CD4-positive, alpha-beta memory T cell (primary cell): ENCODE measurements at regions of chr17 and their contacts with region 1.

Region 1: GRCh38 chr17:7931709-7932482 is at the starts of genes CNTROB and TRAPPC1:
- DNase-seq: peak; percentile 99 to 100 (median 99)
- H3K4me3 ChIP-seq: peak within 1 kb of the TSS; percentile 84 to 100
- H3K4me3 Mint-ChIP-seq: peak within 1 kb of the TSS; percentile 94 to 100 (median 98)
- H3K27ac ChIP-seq: peak within 1 kb of the TSS; percentile 85
- H3K27ac Mint-ChIP-seq: peak within 1 kb of the TSS; percentile 88 to 100 (median 98)
- H3K4me1 ChIP-seq: peaks cover 33% of the 10 kb centered on the region
- H3K4me1 Mint-ChIP-seq: peaks cover 34 to 58% (median 44%) of the 10 kb centered on the region in 4 donors
- H3K27me3 ChIP-seq: no peaks in the 10 kb centered on the region
- H3K27me3 Mint-ChIP-seq: no peaks in the 10 kb centered on the region
- total RNA-seq, gene CNTROB: 29.7 to 30.1 TPM
- total RNA-seq, gene TRAPPC1: 116 TPM

Region 2: GRCh38 chr17:7483238-7484066 is 448.4 kb before region 1 on chr17:
- CTCF ChIA-PET with region 1: no interaction called
- POLR2A ChIA-PET with region 1: no interaction called
- intact Hi-C with region 1: no loop called
- DNase-seq: peak; percentile 96 to 98 (median 97)
- H3K4me3 ChIP-seq: peak overlapping the region; percentile 92 to 95
- H3K4me3 Mint-ChIP-seq: peak overlapping the region; percentile 96 to 100 (median 98)
- H3K27ac ChIP-seq: peak overlapping the region; percentile 99
- H3K27ac Mint-ChIP-seq: peak overlapping the region; percentile 99 to 100 (median 100)
- H3K4me1 ChIP-seq: peaks cover 53% of the 10 kb centered on the region
- H3K4me1 Mint-ChIP-seq: peaks cover 43 to 85% (median 61%) of the 10 kb centered on the region in 4 donors
- H3K27me3 ChIP-seq: no peaks in the 10 kb centered on the region
- H3K27me3 Mint-ChIP-seq: no peaks in the 10 kb centered on the region

Region 3: GRCh38 chr17:7856883-7857723 is 74.8 kb before region 1 on chr17 and contains the start of gene NAA38:
- CTCF ChIA-PET with region 1: interaction called, 9 read pairs
- POLR2A ChIA-PET with region 1: interaction called, 19 read pairs
- intact Hi-C with region 1: loop called (anchors 1 kb)
- DNase-seq: peak; percentile 97 to 99 (median 98)
- H3K4me3 ChIP-seq: peak within 1 kb of the TSS; percentile 67 to 96
- H3K4me3 Mint-ChIP-seq: no peak within 1 kb of the TSS
- H3K27ac ChIP-seq: peak within 1 kb of the TSS; percentile 81
- H3K27ac Mint-ChIP-seq: no peak within 1 kb of the TSS
- H3K4me1 ChIP-seq: peaks cover 32% of the 10 kb centered on the region
- H3K4me1 Mint-ChIP-seq: peaks cover under 1 to 11% (median 7%) of the 10 kb centered on the region in 4 donors
- H3K27me3 ChIP-seq: no peaks in the 10 kb centered on the region
- H3K27me3 Mint-ChIP-seq: no peaks in the 10 kb centered on the region
- total RNA-seq, gene NAA38: 23.1 to 25.8 TPM

Region 4: GRCh38 chr17:7915611-7916382 is 16.1 kb before region 1 on chr17 and contains the start of gene RNF227:
- CTCF ChIA-PET with region 1: interaction called, 19 read pairs
- POLR2A ChIA-PET with region 1: interaction called, 116 read pairs
- intact Hi-C with region 1: loop called (anchors 2 kb)
- DNase-seq: peak; percentile 84 to 88 (median 84)
- H3K4me3 ChIP-seq: peak within 1 kb of the TSS; percentile 33 to 71
- H3K4me3 Mint-ChIP-seq: peak within 1 kb of the TSS; percentile 88 to 95 (median 90)
- H3K27ac ChIP-seq: peak within 1 kb of the TSS; percentile 67
- H3K27ac Mint-ChIP-seq: peak within 1 kb of the TSS; percentile 91 to 95 (median 93)
- H3K4me1 ChIP-seq: peaks cover 26% of the 10 kb centered on the region
- H3K4me1 Mint-ChIP-seq: peaks cover 19 to 34% (median 24%) of the 10 kb centered on the region in 4 donors
- H3K27me3 ChIP-seq: no peaks in the 10 kb centered on the region
- H3K27me3 Mint-ChIP-seq: no peaks in the 10 kb centered on the region
- total RNA-seq, gene RNF227: 6.7 to 7.4 TPM

Region 5: GRCh38 chr17:7969433-7969832 is 37.5 kb after region 1 on chr17:
- CTCF ChIA-PET with region 1: no interaction called
- POLR2A ChIA-PET with region 1: no interaction called
- intact Hi-C with region 1: loop called (anchors 5 kb)
- DNase-seq: no peak
- H3K4me3 ChIP-seq: no peak overlapping the region
- H3K4me3 Mint-ChIP-seq: no peak overlapping the region
- H3K27ac ChIP-seq: no peak overlapping the region
- H3K27ac Mint-ChIP-seq: no peak overlapping the region
- H3K4me1 ChIP-seq: no peaks in the 10 kb centered on the region
- H3K4me1 Mint-ChIP-seq: no peaks in the 10 kb centered on the region
- H3K27me3 ChIP-seq: no peaks in the 10 kb centered on the region
- H3K27me3 Mint-ChIP-seq: peaks cover 0 to 9% of the 10 kb centered on the region in 2 donors

Region 6: DNA sequence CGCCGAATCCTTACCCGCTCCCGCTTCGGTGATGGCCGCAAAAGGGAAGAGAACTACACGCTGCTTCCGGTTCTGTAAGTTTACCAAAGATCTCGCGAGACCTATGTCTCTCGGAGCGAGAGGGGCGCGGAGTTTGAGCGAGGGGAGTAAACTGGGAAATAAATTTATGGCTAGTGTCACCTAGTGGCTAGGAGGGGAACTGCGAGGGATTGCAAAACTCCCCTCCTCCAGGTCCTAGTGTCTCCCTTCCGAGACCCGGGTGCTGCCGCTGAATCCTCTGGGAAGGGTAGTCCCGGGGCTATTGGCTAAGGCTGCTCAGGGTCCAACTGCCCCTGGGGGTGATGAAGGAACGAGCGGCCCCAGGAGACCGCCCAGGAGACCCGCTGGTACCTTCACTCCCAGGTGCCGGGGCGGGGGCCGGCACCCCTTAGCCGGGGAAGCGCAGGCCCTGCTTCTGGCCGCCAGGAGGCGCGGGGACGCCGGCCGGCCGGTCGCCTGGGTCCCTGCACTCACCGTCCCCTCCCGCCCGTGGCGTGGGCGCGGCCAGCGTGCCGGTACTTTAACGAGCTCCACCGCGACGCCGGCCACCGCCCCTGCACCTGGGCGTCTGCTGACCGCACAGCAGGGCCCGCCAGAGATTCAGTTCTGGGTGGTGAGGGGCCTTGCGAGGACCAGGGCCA is 451.4 kb after region 1 on chr17 and contains the start of gene RPL26:
- CTCF ChIA-PET with region 1: no interaction called
- POLR2A ChIA-PET with region 1: no interaction called
- intact Hi-C with region 1: loop called (anchors 2 kb)
- DNase-seq: peak; percentile 96 to 98 (median 97)
- H3K4me3 ChIP-seq: peak within 1 kb of the TSS; percentile 74 to 95
- H3K4me3 Mint-ChIP-seq: peak within 1 kb of the TSS; percentile 95 to 99 (median 97)
- H3K27ac ChIP-seq: peak within 1 kb of the TSS; percentile 77
- H3K27ac Mint-ChIP-seq: peak within 1 kb of the TSS; percentile 94 to 97 (median 96)
- H3K4me1 ChIP-seq: peaks cover 49% of the 10 kb centered on the region
- H3K4me1 Mint-ChIP-seq: peaks cover 36 to 82% (median 54%) of the 10 kb centered on the region in 4 donors
- H3K27me3 ChIP-seq: no peaks in the 10 kb centered on the region
- H3K27me3 Mint-ChIP-seq: no peaks in the 10 kb centered on the region
- total RNA-seq, gene RPL26: 2,761 to 2,878 TPM

Region 7: GRCh38 chr17:9402590-9403199 is 1470.8 kb after region 1 on chr17:
- CTCF ChIA-PET with region 1: no interaction called
- POLR2A ChIA-PET with region 1: no interaction called
- intact Hi-C with region 1: no loop called
- DNase-seq: peak in 3 of 5 donors; percentile 6 to 31 (median 8)
- H3K4me3 ChIP-seq: no peak overlapping the region
- H3K4me3 Mint-ChIP-seq: no peak overlapping the region
- H3K27ac ChIP-seq: no peak overlapping the region
- H3K27ac Mint-ChIP-seq: no peak overlapping the region
- H3K4me1 ChIP-seq: no peaks in the 10 kb centered on the region
- H3K4me1 Mint-ChIP-seq: peaks cover 0 to 3% (median under 1%) of the 10 kb centered on the region in 4 donors
- H3K27me3 ChIP-seq: no peaks in the 10 kb centered on the region
- H3K27me3 Mint-ChIP-seq: no peaks in the 10 kb centered on the region